Psoas muscle (tissue), 8 donors: ENCODE measurements at regions of chr10 and their contacts with region 1.

Region 1: DNA sequence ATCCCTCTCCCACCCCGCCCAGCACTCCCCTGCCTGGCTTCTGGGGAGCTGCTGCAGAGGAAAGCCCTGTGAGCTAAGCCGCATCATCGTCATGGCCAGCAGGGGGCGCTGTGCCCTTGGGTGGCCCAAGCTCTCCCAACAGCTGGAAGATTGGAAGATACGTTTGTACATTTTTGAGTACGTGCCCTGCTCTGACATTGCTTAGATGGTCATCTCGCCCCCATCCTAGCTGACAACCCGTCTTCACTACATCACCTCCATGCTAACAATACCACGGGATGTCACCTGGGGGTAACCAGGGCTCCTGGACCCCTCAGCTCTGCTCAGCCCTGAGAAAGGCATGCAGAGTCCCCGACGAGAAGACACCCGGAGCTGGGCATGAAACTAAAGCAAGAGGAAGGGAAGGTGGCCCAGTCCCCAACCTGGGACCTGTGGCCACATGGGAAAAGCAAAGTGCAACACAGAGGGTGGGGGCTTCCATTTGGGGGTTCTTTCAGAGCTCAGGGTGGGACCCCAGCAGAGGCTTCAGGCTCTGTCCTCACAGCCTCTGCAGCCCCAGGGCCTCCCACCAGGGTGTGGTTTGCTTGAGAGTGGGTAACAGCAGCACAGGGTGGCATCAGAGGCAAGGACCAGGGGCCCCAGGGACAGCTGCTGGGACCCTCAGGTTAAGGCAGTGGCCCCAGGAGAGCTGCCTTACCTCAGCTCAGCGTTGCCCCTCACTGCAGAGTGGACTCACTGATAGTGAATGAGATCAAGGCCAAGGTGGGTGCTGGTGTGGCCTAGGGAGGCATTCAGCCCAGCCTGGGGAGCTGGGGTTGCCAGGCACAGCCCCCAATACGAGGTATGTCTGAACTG is 136.7 kb downstream of the PTPN20 start:
- DNase-seq: peak; percentile 76 to 88
- ATAC-seq: peak; percentile 77 to 88 (median 82)
- H3K4me3 ChIP-seq: no peak overlapping the region
- H3K27ac ChIP-seq: no peak overlapping the region
- H3K4me1 ChIP-seq: no peaks in the 10 kb centered on the region
- H3K27me3 ChIP-seq: no peaks in the 10 kb centered on the region
- CTCF ChIP-seq: peak; percentile 86

Region 2: GRCh38 chr10:47269294-47269693 is 221.4 kb after region 1 on chr10:
- intact Hi-C with region 1: loop called in 1 of 2 experiments (anchors 5 kb)
- DNase-seq: no peak
- ATAC-seq: peak in 2 of 4 donors; percentile 83
- H3K4me3 ChIP-seq: no peak overlapping the region
- H3K27ac ChIP-seq: no peak overlapping the region
- H3K4me1 ChIP-seq: no peaks in the 10 kb centered on the region
- H3K27me3 ChIP-seq: peaks cover 0 to 3% (median 0%) of the 10 kb centered on the region in 3 donors
- CTCF ChIP-seq: peak; percentile 25

Region 3: DNA sequence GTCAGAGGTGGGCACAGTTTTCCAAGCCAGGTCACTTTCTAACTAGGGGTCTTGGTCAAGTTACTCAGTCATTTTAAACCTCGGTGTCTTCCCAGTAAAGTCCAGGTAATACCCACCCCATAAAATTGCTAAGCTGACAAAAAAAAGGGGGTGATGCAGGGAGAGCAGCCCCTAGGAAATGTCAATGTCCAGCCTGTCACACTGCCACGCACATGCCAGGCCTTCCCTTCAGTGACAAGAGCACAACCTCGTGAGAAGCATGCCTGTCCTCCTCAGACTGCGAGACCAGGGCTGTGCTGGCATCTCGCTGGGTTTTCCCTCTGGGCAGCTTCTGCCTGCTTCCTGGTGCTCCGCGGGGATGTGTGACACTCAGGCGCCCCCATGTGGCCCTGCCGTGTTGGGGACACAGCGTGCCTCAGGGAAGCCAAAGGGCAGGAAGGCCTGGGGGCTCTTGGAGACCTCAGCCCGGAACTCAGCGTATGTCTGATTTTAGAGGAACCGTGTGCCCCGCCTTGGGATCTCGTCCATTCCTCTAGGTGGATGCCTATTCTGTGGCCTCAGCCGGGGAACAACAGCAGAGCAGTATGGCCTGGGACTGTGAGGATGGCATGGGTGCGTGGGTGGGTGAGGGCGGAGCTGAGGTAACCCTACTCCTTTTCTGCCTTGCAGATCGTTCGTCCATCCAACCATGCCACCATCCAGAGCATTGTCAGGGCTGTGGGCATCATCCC is 264.2 kb after region 1 on chr10:
- intact Hi-C with region 1: loop called in 1 of 2 experiments (anchors 1 kb)
- DNase-seq: peak; percentile 83 to 90
- ATAC-seq: peak; percentile 91 to 99 (median 93)
- H3K4me3 ChIP-seq: no peak overlapping the region
- H3K27ac ChIP-seq: no peak overlapping the region
- H3K4me1 ChIP-seq: no peaks in the 10 kb centered on the region
- H3K27me3 ChIP-seq: peaks cover 0 to 5% (median 0%) of the 10 kb centered on the region in 3 donors
- CTCF ChIP-seq: peak; percentile 81